ENCODE measurements at regions of chr12 and their contacts with region 1.

Region 1: GRCh38 chr12:10235761-10236631 is 23.3 kb downstream of the GABARAPL1 start:
- DNase-seq: no peak
- H3K4me3 ChIP-seq: no peak overlapping the region
- H3K27ac ChIP-seq: no peak overlapping the region
- H3K4me1 ChIP-seq: no peaks in the 10 kb centered on the region
- H3K27me3 ChIP-seq: no peaks in the 10 kb centered on the region
- CTCF ChIP-seq: peak; percentile 73 to 75

Region 2: GRCh38 chr12:9869307-9870161 is 366.5 kb before region 1 on chr12 and contains the start of gene CLEC2B:
- CTCF ChIA-PET with region 1: no interaction called
- dilution Hi-C with region 1: no loop called
- in situ Hi-C with region 1: no loop called
- intact Hi-C with region 1: no loop called
- DNase-seq: peak; percentile 92
- H3K4me3 ChIP-seq: peak within 1 kb of the TSS; percentile 45 to 56 (median 53)
- H3K27ac ChIP-seq: peak within 1 kb of the TSS; percentile 70
- H3K4me1 ChIP-seq: peaks cover 26% of the 10 kb centered on the region
- H3K27me3 ChIP-seq: no peaks in the 10 kb centered on the region
- CTCF ChIP-seq: no peak
- total RNA-seq, gene CLEC2B: 0.17 to 0.42 TPM

Region 3: GRCh38 chr12:10130042-10130441 is 106.0 kb before region 1 on chr12 and contains the start of gene CLEC7A:
- CTCF ChIA-PET with region 1: no interaction called
- dilution Hi-C with region 1: no loop called
- in situ Hi-C with region 1: no loop called
- intact Hi-C with region 1: no loop called
- DNase-seq: peak; percentile 52
- H3K4me3 ChIP-seq: no peak within 1 kb of the TSS
- H3K27ac ChIP-seq: no peak within 1 kb of the TSS
- H3K4me1 ChIP-seq: peaks cover 8% of the 10 kb centered on the region
- H3K27me3 ChIP-seq: no peaks in the 10 kb centered on the region
- CTCF ChIP-seq: no peak
- total RNA-seq, gene CLEC7A: not detected

Region 4: GRCh38 chr12:10331642-10332239 is 95.7 kb after region 1 on chr12:
- CTCF ChIA-PET with region 1: no interaction called
- dilution Hi-C with region 1: no loop called
- in situ Hi-C with region 1: no loop called
- intact Hi-C with region 1: loop called (anchors 5 kb)
- DNase-seq: peak; percentile 36
- H3K4me3 ChIP-seq: no peak overlapping the region
- H3K27ac ChIP-seq: no peak overlapping the region
- H3K4me1 ChIP-seq: no peaks in the 10 kb centered on the region
- H3K27me3 ChIP-seq: no peaks in the 10 kb centered on the region
- CTCF ChIP-seq: peak; percentile 81 to 89

Region 5: GRCh38 chr12:10354502-10354901 is 118.5 kb after region 1 on chr12:
- CTCF ChIA-PET with region 1: no interaction called
- dilution Hi-C with region 1: no loop called
- in situ Hi-C with region 1: no loop called
- intact Hi-C with region 1: no loop called
- DNase-seq: peak; percentile 17
- H3K4me3 ChIP-seq: no peak overlapping the region
- H3K27ac ChIP-seq: no peak overlapping the region
- H3K4me1 ChIP-seq: no peaks in the 10 kb centered on the region
- H3K27me3 ChIP-seq: no peaks in the 10 kb centered on the region
- CTCF ChIP-seq: no peak

Region 6: DNA sequence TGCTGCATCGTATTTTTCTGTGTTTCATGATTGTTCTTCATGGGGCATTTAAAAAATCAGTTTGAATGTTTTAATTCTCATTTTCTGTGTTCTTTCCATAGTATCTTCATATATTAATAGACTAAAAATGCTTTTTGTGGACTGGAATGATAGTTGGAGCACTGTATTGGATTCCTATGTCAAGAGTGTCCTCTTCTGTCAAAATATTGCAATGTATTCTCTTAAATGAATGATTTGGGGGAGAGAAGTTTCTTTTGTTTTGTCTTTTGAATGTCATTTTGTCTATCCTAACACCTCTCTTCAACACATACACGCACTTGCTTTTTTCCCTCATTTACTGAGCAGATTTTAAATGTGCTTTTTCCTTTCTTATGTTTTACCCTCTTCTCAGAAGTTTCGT is 265.0 kb after region 1 on chr12:
- CTCF ChIA-PET with region 1: no interaction called
- dilution Hi-C with region 1: no loop called
- in situ Hi-C with region 1: no loop called
- intact Hi-C with region 1: loop called (anchors 1 kb)
- DNase-seq: peak; percentile 9
- H3K4me3 ChIP-seq: no peak overlapping the region
- H3K27ac ChIP-seq: no peak overlapping the region
- H3K4me1 ChIP-seq: no peaks in the 10 kb centered on the region
- H3K27me3 ChIP-seq: peaks cover 4% of the 10 kb centered on the region
- CTCF ChIP-seq: peak; percentile 40 to 67

Region 7: GRCh38 chr12:10661338-10661737 is 425.3 kb after region 1 on chr12:
- CTCF ChIA-PET with region 1: no interaction called
- dilution Hi-C with region 1: no loop called
- in situ Hi-C with region 1: loop called in 1 of 2 experiments (anchors 10 kb)
- intact Hi-C with region 1: no loop called
- DNase-seq: peak; percentile 22
- H3K4me3 ChIP-seq: no peak overlapping the region
- H3K27ac ChIP-seq: no peak overlapping the region
- H3K4me1 ChIP-seq: no peaks in the 10 kb centered on the region
- H3K27me3 ChIP-seq: no peaks in the 10 kb centered on the region
- CTCF ChIP-seq: no peak

Region 8: GRCh38 chr12:10690906-10691305 is 454.9 kb after region 1 on chr12:
- CTCF ChIA-PET with region 1: no interaction called
- dilution Hi-C with region 1: no loop called
- in situ Hi-C with region 1: loop called in 1 of 2 experiments (anchors 25 kb)
- intact Hi-C with region 1: no loop called
- DNase-seq: no peak
- H3K4me3 ChIP-seq: no peak overlapping the region
- H3K27ac ChIP-seq: no peak overlapping the region
- H3K4me1 ChIP-seq: no peaks in the 10 kb centered on the region
- H3K27me3 ChIP-seq: no peaks in the 10 kb centered on the region
- CTCF ChIP-seq: no peak